Tibial artery (tissue), 4 donors: ENCODE measurements at regions of chr7 and their contacts with region 1.

Region 1: GRCh38 chr7:135170274-135170997 is at the start of gene CYREN:
- DNase-seq: peak; percentile 91 to 98
- H3K4me3 ChIP-seq: peak within 1 kb of the TSS; percentile 78 to 99
- H3K27ac ChIP-seq: peak within 1 kb of the TSS; percentile 93 to 97
- H3K4me1 ChIP-seq: peaks cover 7 to 40% (median 35%) of the 10 kb centered on the region in 4 donors
- H3K27me3 ChIP-seq: no peaks in the 10 kb centered on the region
- CTCF ChIP-seq: peak; percentile 61 to 71

Region 2: GRCh38 chr7:134992626-134993179 is 177.7 kb before region 1 on chr7:
- intact Hi-C with region 1: loop called (anchors 10 kb)
- DNase-seq: no peak
- H3K4me3 ChIP-seq: peak overlapping the region in 1 of 2 donors; percentile 7
- H3K27ac ChIP-seq: peak overlapping the region; percentile 48 to 57
- H3K4me1 ChIP-seq: peaks cover 0 to 68% (median 29%) of the 10 kb centered on the region in 4 donors
- H3K27me3 ChIP-seq: no peaks in the 10 kb centered on the region
- CTCF ChIP-seq: no peak

Region 3: DNA sequence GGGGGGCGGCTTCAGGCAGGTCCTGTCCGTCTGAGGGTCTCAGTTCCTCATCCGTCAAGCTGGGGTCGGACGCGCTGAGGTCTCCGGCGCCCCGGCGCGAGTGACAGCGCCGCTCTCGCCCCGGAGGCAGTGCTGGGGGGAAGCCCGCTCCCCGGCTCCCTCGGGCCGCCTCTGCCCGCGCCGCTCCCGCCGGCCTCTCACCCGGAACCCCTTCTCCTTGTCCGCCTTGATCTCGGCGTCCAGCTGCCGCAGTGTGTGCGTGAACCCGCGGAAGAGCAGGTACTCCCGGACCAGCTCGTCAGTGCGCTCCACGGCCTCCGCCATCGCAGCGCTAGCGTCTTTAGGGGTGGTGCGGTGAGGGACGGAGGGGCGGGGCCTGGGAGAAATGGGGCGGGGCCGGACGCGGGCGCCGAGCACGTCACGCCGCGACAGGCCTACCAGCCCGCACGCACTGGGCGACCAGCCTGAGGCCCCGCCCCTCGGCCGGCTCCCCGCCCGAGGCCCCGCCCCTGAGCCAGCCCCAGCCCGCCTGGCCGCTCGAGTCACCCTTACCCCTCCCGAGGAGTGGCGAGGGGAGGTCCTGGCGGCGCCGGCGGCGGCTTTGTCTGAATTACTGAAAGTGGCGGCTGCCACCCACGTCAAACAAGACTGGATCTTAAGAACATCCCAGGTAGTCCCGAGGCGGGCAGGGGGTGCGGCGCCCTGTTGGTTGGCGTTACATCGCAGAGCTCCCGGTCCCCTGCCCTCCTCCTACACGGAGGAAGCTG is 40.9 kb after region 1 on chr7 and contains the start of gene WDR91:
- intact Hi-C with region 1: loop called (anchors 5 kb)
- DNase-seq: peak; percentile 93 to 99
- H3K4me3 ChIP-seq: peak within 1 kb of the TSS; percentile 66 to 93
- H3K27ac ChIP-seq: peak within 1 kb of the TSS; percentile 94 to 98
- H3K4me1 ChIP-seq: peaks cover 0 to 35% (median 20%) of the 10 kb centered on the region in 4 donors
- H3K27me3 ChIP-seq: no peaks in the 10 kb centered on the region
- CTCF ChIP-seq: no peak